HCT116 (cell line): ENCODE measurements at regions of chr5 and their contacts with region 1.

Region 1: DNA sequence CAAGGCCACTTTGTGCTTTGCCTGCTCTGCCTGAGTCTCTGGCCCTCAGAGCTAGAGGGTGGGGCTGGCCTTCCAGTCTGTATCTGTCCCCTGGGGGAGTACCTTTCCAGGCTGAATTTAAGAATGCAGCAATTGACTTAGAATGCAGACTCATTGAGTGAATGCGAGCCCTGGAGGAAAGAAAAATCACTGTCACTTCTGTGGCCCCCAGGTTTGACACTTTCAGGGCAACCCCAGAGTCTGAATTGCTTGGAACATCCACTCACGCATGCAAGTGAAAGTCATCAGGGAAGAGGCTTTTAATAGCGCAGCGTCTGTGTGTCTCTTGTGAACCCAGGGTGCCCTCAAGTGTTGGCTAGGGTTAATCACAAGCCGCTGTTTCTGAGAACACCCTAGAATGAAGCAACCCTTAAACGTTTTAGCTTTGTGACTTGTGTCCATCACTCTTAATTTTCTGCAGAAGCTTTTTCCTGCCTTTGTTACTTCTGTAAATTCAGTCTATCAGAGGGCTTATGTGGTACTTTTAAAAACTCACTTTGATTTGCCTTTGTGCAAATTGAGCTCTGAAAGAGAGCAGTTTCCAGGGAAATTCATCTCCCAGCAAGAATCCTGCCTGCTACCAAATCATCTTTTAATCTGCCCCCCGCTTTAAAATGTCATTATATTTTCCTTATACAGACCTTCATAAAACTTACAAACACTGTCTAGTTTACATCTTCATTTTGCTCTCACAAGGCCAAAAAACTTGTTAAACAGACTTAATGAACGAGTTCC is 146.8 kb upstream of the IQGAP2 start:
- DNase-seq: peak; percentile 52
- ATAC-seq: peak; percentile 98
- H3K4me3 ChIP-seq: peak overlapping the region in 1 of 2 experiments; percentile 22; a peak in 1 of 4 replicates
- H3K27ac ChIP-seq: no peak overlapping the region
- H3K4me1 ChIP-seq: peaks cover 0 to 15% of the 10 kb centered on the region in 2 experiments; a peak in 2 of 4 replicates
- H3K27me3 ChIP-seq: no peaks in the 10 kb centered on the region
- CTCF ChIP-seq: peak; percentile 56 to 74 (median 59); a peak in 5 of 6 replicates
- POLR2A ChIP-seq: no peak
- RAD21 ChIP-seq: peak; percentile 89

Region 2: DNA sequence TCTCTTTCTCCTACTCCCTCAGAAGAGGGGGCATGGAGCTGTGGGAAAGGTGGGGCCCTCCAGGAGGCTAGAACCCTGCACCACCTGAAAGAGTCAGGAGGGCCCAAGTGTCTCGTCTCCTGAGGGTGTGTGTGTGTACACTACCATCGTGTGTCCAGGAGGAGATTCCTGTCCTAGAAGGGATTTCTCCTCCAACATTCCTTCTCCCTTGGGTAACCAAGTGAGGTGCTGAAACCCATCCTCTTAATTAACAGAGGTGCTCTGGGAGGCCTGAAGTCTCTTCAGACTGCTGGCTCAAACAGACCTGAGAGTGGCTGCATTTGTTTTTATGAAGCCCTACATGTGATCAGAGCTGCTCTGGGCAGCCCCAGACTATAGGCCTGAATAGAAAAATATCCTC is 1329.0 kb before region 1 on chr5:
- CTCF ChIA-PET with region 1: interaction called, 3 read pairs
- POLR2A ChIA-PET with region 1: no interaction called
- RAD21 ChIA-PET with region 1: no interaction called
- intact Hi-C with region 1: loop called (anchors 5 kb)
- DNase-seq: no peak
- ATAC-seq: no peak
- H3K4me3 ChIP-seq: no peak overlapping the region
- H3K27ac ChIP-seq: no peak overlapping the region
- H3K4me1 ChIP-seq: no peaks in the 10 kb centered on the region
- H3K27me3 ChIP-seq: no peaks in the 10 kb centered on the region
- CTCF ChIP-seq: no peak
- POLR2A ChIP-seq: no peak
- RAD21 ChIP-seq: no peak

Region 3: DNA sequence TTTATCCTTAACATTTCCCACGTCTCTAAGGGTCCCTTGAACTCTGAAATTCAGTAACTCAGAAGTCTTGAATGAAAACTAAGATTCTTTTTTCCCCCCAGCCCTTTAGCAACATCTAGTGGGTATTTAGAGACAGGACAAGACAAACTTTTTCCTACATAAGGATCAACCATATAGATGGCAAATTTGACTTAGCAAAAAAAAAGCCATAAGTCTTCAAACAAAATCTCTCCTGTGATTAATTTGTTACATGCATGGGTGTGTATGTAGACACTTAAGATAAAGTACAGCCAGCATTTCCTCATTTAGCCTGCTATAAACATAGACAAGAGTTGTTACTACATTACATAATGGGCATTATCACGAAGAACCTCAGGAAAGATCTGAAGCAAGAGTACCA is 990.6 kb before region 1 on chr5:
- CTCF ChIA-PET with region 1: no interaction called
- POLR2A ChIA-PET with region 1: no interaction called
- RAD21 ChIA-PET with region 1: no interaction called
- intact Hi-C with region 1: loop called (anchors 10 kb)
- DNase-seq: peak; percentile 37
- ATAC-seq: peak; percentile 73
- H3K4me3 ChIP-seq: no peak overlapping the region
- H3K27ac ChIP-seq: no peak overlapping the region
- H3K4me1 ChIP-seq: no peaks in the 10 kb centered on the region
- H3K27me3 ChIP-seq: no peaks in the 10 kb centered on the region
- CTCF ChIP-seq: peak; percentile 71 to 77 (median 76); a peak in 5 of 6 replicates
- POLR2A ChIP-seq: no peak
- RAD21 ChIP-seq: peak; percentile 90

Region 4: GRCh38 chr5:75756981-75757380 is 499.3 kb before region 1 on chr5:
- CTCF ChIA-PET with region 1: no interaction called
- POLR2A ChIA-PET with region 1: no interaction called
- RAD21 ChIA-PET with region 1: no interaction called
- intact Hi-C with region 1: no loop called
- DNase-seq: no peak
- ATAC-seq: no peak
- H3K4me3 ChIP-seq: no peak overlapping the region
- H3K27ac ChIP-seq: no peak overlapping the region
- H3K4me1 ChIP-seq: no peaks in the 10 kb centered on the region
- H3K27me3 ChIP-seq: peaks cover 51% of the 10 kb centered on the region
- CTCF ChIP-seq: no peak
- POLR2A ChIP-seq: no peak
- RAD21 ChIP-seq: no peak

Region 5: DNA sequence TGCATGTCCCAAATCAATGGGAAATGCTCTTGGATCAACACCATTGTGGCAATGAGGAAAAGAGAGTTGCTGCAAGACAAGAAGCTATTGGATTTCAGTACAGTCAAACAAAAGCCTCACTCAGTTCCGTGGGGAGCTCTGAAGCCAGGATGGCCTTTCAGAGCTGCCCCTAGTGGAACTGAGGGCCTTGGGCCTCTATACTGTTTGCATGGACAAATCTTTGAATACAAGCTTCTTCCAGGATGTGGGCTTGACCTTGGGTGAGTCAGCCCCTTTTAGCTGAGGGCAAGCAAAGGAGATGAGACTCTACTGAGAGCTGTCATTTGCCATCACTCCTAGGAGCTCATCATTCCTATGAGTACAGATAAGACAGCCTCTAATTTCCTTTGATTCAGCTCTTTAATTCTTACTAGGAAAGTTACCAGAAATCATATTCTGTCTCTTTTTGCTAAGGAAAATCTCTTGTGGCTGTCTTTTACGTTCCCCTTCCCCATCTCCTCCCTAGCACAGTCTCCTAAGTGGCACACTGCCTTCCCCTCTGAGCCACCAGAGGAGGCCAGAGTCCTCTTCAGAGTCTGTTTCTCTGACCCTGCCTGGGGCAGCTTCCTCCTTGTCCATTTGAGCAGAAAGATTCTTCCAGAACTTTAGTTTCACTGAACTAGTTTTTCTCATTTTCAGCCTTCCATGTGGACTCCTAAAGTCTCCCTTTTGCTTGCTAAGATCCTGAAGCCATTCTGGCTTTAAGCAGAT is 370.3 kb before region 1 on chr5:
- CTCF ChIA-PET with region 1: interaction called, 6 read pairs
- POLR2A ChIA-PET with region 1: no interaction called
- RAD21 ChIA-PET with region 1: no interaction called
- intact Hi-C with region 1: loop called (anchors 5 kb)
- DNase-seq: no peak
- ATAC-seq: peak; percentile 57
- H3K4me3 ChIP-seq: no peak overlapping the region
- H3K27ac ChIP-seq: no peak overlapping the region
- H3K4me1 ChIP-seq: no peaks in the 10 kb centered on the region
- H3K27me3 ChIP-seq: no peaks in the 10 kb centered on the region
- CTCF ChIP-seq: peak; percentile 9 to 47 (median 39); a peak in 5 of 6 replicates
- POLR2A ChIP-seq: no peak
- RAD21 ChIP-seq: peak; percentile 29; the same call in 1 of the 2 replicates

Region 6: DNA sequence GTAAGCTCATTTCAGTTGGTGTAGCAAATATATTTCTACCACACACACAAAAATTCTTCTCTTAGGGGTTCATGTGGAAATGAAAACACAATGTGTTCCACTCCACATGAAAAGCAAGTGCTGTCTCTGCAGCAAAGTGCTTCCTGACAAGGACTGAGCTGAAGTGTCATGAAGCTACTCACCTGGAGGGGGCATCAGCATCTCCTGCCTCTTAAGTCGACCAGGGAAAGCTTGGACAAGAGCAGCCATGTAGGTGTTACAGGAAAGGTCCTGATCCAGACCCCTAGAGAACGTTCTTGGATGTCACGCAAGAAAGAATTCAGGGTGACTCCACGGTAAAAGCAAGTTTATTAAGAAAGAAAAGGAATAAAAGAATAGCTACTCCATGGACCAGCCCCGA is 110.4 kb before region 1 on chr5:
- CTCF ChIA-PET with region 1: interaction called, 3 read pairs
- POLR2A ChIA-PET with region 1: no interaction called
- RAD21 ChIA-PET with region 1: no interaction called
- intact Hi-C with region 1: loop called (anchors 5 kb)
- DNase-seq: peak; percentile 51
- ATAC-seq: peak; percentile 90
- H3K4me3 ChIP-seq: no peak overlapping the region
- H3K27ac ChIP-seq: no peak overlapping the region
- H3K4me1 ChIP-seq: no peaks in the 10 kb centered on the region
- H3K27me3 ChIP-seq: peaks cover 10% of the 10 kb centered on the region; the same call in 1 of the 2 replicates
- CTCF ChIP-seq: peak; percentile 7 to 68 (median 57); a peak in 4 of 6 replicates
- POLR2A ChIP-seq: no peak
- RAD21 ChIP-seq: peak; percentile 31; the same call in 1 of the 2 replicates